H1 (cell line): ENCODE measurements at regions of chr10 and their contacts with region 1.

Region 1: DNA sequence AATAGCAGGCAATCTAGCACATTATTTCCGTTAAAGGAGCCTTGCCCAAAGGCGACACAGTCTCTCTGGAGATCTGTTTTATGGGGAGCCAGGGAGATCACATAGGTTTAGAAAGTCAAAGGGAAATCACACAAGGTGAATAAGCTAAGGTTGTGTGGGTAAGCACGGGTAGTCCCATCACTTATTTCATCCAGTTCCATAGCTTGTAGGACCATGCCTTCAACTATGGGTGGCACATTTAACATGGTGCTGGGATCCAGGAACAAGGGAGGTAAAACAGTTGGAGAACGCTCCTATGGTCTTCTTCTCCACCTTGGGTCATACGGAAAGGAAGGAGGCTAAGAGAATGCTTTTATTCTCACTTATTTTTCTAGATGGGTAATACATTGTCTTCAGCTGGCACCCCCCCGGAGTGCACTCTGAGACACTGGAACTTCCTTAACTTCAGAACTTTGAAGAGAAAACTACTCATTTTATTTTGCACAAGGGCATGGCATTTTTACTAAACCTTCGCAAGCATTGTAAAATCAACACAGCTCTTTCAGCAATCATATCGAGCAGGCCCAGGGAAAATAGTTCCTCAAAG is 435.4 kb downstream of the KIF20B start:
- DNase-seq: peak in 1 of 2 experiments; percentile 54
- H3K4me3 ChIP-seq: no peak overlapping the region
- H3K27ac ChIP-seq: no peak overlapping the region
- H3K4me1 ChIP-seq: no peaks in the 10 kb centered on the region
- H3K27me3 ChIP-seq: no peaks in the 10 kb centered on the region
- CTCF ChIP-seq: no peak
- EP300 ChIP-seq: no peak
- POLR2A ChIP-seq: no peak
- RAD21 ChIP-seq: no peak

Region 2: DNA sequence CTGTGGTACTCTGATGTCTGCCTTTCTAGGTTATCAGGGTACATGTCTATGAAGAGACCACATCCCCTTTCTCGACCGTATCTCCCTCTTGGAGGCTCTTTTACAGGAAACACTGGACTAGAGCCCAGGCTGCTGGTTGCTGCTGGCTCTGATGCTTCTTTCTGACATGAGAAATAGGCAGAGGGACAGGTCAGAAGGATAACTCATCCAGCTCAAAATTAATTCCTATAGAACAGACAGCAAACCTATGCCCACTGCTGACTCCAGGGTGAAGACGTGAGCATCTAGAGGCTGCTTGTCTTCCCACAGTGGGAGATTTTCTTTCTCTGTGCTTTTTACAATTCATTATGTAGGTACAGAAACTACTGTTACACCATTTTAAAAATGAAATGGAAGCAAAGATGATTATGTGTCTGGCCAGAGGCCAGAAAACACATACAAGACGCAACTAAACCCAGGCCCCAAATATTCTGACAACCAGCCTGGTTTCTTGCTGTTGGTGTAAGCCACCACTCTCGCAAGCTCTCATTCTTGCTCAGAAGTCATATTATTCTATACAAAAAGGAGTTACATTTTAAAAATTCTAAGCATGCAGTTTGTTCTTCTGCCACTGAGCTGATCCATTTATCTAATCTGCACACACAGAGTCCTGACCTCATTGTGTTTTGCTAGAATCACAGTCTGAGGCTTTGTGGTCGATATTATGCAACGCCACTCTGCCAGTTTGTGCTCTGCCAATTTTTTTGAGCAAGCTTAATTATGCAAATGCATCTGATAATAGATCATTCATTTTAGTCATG is 11.2 kb before region 1 on chr10:
- CTCF ChIA-PET with region 1: interaction called, 14 read pairs
- POLR2A ChIA-PET with region 1: no interaction called
- DNase-seq: no peak
- H3K4me3 ChIP-seq: no peak overlapping the region
- H3K27ac ChIP-seq: no peak overlapping the region
- H3K4me1 ChIP-seq: no peaks in the 10 kb centered on the region
- H3K27me3 ChIP-seq: peaks cover 0 to 1% (median 0%) of the 10 kb centered on the region in 4 experiments; a peak in 1 of 7 replicates
- CTCF ChIP-seq: no peak
- EP300 ChIP-seq: no peak
- POLR2A ChIP-seq: no peak
- RAD21 ChIP-seq: no peak

Region 3: DNA sequence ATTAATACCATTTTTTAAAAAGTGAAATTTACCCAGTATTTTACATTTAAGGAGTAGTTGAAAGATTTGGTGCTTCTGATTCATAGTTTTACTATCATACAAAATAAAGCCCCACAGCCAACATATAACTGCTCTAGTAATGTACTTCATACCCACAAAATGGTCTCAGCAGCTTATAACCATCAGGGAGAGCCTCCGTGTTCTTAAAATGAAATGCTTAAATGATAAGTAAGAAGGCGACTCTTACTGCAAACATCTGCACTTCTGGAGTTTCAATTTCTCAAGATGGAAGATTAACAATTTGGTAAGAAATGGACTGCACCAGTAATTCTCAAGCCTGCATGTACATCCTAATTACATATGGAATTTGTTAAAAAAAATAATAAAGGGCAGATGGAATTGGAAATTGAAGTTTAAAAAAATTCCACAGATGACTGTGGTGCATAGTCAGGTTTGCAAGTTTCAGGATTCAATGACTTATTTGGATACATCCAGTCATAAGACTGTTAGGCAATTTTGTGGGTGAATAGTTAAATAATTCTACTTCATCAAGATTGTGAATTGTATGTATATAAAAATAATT is 25.5 kb after region 1 on chr10:
- CTCF ChIA-PET with region 1: no interaction called
- POLR2A ChIA-PET with region 1: no interaction called
- DNase-seq: no peak
- H3K4me3 ChIP-seq: no peak overlapping the region
- H3K27ac ChIP-seq: no peak overlapping the region
- H3K4me1 ChIP-seq: no peaks in the 10 kb centered on the region
- H3K27me3 ChIP-seq: no peaks in the 10 kb centered on the region
- CTCF ChIP-seq: no peak
- EP300 ChIP-seq: no peak
- POLR2A ChIP-seq: no peak
- RAD21 ChIP-seq: no peak